Posterior vena cava (tissue), 2 donors: ENCODE measurements at regions of chr18 and their contacts with region 1.

Region 1: GRCh38 chr18:67194886-67195285 is 321.6 kb downstream of the DSEL start:
- DNase-seq: no peak

Region 2: GRCh38 chr18:67132919-67133318 is 62.0 kb before region 1 on chr18:
- intact Hi-C with region 1: loop called in 1 of 2 experiments (anchors 2 kb)
- DNase-seq: no peak